HepG2 (cell line): ENCODE measurements at regions of chr3 and their contacts with region 1.

Region 1: DNA sequence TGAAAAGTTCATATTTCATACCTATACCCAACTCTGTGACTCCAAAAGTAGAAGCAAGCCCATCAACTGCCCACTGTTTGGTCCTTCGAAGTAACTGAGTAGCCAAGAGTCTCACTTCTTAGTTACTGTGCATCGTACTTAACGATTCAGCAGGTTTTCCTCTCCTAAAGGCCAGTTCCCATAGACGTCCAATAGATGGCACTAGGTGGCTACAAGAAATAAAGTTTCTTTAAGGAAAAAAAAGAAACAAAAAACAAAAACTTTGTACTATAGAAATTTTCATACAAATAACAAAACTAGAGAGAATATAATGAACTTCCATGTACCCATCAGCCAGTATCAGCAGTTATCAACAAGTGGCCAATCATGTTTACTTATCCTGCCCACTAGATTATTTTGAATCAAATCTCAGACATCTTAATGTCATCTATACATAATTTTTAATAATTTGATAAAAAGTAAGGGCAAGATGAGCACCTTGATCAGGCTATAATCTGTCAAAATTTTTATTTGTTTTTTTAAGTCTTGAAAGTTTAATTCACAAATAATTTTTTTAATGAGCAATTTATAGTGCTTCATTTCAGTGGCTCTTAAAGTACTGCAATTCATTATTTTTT is 63.8 kb upstream of the ACP3 start:
- DNase-seq: peak; percentile 43
- ATAC-seq: peak; percentile 66
- H3K4me3 ChIP-seq: no peak overlapping the region
- H3K27ac ChIP-seq: no peak overlapping the region
- H3K4me1 ChIP-seq: no peaks in the 10 kb centered on the region
- H3K27me3 ChIP-seq: no peaks in the 10 kb centered on the region
- CTCF ChIP-seq: peak; percentile 65
- EP300 ChIP-seq: no peak
- POLR2A ChIP-seq: no peak
- RAD21 ChIP-seq: no peak

Region 2: DNA sequence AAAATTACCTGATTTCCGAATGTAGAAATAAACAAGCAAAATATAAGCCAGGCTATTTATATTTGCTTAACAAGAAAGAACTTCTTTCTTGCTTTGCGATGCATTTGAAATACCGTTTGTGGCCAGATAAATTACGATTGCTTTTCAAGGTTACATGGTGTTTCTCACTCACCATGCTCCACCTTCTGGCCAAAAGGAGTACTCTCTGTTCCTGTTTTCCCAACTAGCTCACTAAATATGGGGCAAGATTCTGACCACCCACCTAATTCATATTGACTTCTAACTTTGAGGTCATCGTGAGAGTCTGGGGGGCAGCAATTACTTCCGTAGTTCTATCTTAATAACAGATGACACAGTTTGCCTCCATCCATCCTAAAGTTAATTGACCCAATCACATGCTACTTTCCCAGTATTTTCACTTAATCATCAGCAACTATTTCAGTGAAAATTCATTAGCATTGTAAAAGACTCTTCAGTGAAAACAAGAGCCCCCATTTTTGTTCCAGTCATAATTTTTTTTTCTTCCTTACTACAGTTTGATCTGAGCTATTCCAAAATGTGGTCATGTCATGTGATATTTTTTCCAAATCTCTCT is 89.7 kb after region 1 on chr3:
- CTCF ChIA-PET with region 1: interaction called, 34 read pairs
- POLR2A ChIA-PET with region 1: no interaction called
- in situ Hi-C with region 1: loop called (anchors 5 kb)
- intact Hi-C with region 1: loop called (anchors 1 kb)
- DNase-seq: peak; percentile 50
- ATAC-seq: peak; percentile 78
- H3K4me3 ChIP-seq: no peak overlapping the region
- H3K27ac ChIP-seq: no peak overlapping the region
- H3K4me1 ChIP-seq: no peaks in the 10 kb centered on the region
- H3K27me3 ChIP-seq: 0 out of 5 replicates have a peak, but pooled peaks cover 0 to 2% of the 10 kb centered on the region in 2 experiments
- CTCF ChIP-seq: peak; percentile 78
- EP300 ChIP-seq: no peak
- POLR2A ChIP-seq: no peak
- RAD21 ChIP-seq: peak; percentile 53; the same call in 1 of the 2 replicates